ENCODE measurements at regions of chr1 and their contacts with region 1.

Region 1: DNA sequence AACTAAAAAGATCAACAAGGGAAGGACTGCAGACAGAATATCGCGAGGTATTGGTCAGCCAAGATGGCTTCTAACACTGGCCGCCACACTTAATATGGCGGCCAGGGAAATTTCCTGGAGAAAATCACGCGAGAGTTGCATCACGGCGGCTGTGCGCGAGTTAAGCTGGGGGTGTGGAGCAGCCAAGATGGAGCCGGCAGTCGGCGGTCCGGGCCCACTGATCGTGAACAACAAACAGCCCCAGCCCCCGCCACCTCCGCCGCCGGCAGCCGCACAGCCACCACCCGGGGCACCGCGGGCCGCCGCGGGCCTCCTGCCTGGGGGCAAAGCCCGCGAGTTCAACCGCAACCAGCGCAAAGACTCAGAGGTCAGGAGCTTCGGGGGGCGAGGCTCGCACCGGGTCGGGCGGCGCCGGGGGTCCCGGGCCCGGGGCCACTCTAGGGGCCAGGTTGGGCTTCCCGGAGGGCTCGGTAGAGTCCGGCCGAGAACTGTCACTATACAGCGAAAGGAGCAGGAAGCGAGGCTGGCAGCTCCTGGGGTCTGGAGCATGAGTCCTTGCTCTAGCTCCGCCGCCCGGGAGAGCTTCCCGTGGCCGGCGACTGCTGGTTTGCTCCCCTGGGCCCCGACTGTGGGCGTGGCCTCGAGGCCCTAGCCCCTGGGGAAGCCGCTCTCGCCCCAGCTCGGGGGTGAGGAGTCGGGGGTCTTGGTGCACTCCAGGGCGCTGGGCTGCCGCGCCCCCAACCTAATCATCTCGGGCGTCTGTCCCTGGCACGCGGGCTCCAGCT is at the start of gene STRIP1:
- DNase-seq: peak; percentile 91
- H3K4me3 Mint-ChIP-seq: peak within 1 kb of the TSS; percentile 95
- H3K27ac Mint-ChIP-seq: peak within 1 kb of the TSS; percentile 85
- H3K4me1 Mint-ChIP-seq: peaks cover 54% of the 10 kb centered on the region
- H3K27me3 Mint-ChIP-seq: no peaks in the 10 kb centered on the region
- total RNA-seq, gene STRIP1: 41.5 and 43.7 TPM in 2 replicates

Region 2: GRCh38 chr1:109483672-109484518 is 550.7 kb before region 1 on chr1 and contains the start of gene ATXN7L2:
- intact Hi-C with region 1: loop called (anchors 1 kb)
- DNase-seq: peak; percentile 87
- H3K4me3 Mint-ChIP-seq: peak within 1 kb of the TSS; percentile 95
- H3K27ac Mint-ChIP-seq: peak within 1 kb of the TSS; percentile 96
- H3K4me1 Mint-ChIP-seq: peaks cover 35% of the 10 kb centered on the region
- H3K27me3 Mint-ChIP-seq: peaks cover 13% of the 10 kb centered on the region
- total RNA-seq, gene ATXN7L2: 17.4 and 18.0 TPM in 2 replicates

Region 3: DNA sequence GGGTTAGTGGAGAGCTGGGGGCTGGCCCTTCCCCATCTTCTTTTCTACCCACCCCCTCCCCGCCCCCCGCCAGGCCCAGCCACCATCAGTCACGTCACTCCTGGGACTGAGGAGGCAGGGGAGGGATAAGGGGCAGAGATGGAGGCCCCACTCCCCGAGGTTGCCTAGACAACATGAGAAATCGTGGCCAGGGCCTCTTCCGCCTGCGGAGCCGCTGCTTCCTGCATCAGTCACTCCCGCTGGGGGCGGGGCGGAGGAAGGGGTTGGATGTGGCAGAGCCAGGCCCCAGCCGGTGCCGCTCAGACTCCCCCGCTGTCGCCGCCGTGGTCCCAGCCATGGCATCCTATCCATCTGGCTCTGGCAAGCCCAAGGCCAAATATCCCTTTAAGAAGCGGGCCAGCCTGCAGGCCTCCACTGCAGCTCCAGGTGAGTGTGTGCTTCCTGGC is 413.8 kb before region 1 on chr1:
- intact Hi-C with region 1: loop called (anchors 1 kb)
- DNase-seq: peak; percentile 96
- H3K4me3 Mint-ChIP-seq: peak overlapping the region; percentile 95
- H3K27ac Mint-ChIP-seq: peak overlapping the region; percentile 97
- H3K4me1 Mint-ChIP-seq: peaks cover 64% of the 10 kb centered on the region
- H3K27me3 Mint-ChIP-seq: peaks cover 2% of the 10 kb centered on the region

Region 4: DNA sequence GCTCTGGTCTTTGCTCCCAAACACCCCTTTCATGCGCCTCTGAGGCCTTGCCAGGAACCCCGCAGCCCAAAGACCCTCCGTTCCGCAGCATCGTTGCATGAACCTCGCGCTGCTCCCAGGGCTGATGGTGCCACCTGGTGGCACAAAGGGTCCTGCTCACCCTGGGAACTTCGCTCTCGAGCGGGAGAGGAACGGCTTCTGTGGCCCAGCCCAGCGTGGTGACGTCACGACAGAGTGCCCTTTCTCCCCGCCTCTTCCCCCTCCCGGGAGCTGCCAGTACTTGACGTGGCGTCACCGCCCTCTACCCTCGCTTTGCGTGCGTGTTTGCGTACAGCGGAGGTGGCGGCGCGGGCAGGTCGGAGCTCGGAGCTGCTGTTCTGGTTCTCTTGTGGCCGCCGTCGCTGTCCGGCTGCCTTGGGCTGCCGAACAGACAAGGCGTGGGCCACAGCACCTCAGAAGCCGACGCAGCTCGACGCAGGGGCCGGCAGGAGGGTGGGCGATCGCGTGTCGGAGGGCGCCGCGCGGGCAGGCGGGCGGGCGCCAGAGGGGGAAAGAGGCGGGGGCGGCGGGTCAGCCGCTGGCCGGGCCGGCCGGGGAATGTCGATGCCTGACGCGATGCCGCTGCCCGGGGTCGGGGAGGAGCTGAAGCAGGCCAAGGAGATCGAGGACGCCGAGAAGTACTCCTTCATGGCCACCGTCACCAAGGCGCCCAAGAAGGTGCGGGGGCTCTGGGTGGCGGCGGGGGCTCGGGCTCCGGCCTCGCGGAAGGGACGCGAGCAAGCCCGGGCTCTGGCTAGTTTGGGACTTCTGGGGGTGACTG is 50.0 kb before region 1 on chr1 and contains the start of gene AHCYL1:
- intact Hi-C with region 1: loop called (anchors 1 kb)
- DNase-seq: peak; percentile 99
- H3K4me3 Mint-ChIP-seq: peak within 1 kb of the TSS; percentile 93
- H3K27ac Mint-ChIP-seq: peak within 1 kb of the TSS; percentile 97
- H3K4me1 Mint-ChIP-seq: peaks cover 36% of the 10 kb centered on the region
- H3K27me3 Mint-ChIP-seq: peaks cover 4% of the 10 kb centered on the region
- total RNA-seq, gene AHCYL1: 63.8 and 64.1 TPM in 2 replicates

Region 5: GRCh38 chr1:110060034-110060661 is 25.5 kb after region 1 on chr1:
- intact Hi-C with region 1: loop called (anchors 1 kb)
- DNase-seq: peak; percentile 54
- H3K4me3 Mint-ChIP-seq: no peak overlapping the region
- H3K27ac Mint-ChIP-seq: peak overlapping the region; percentile 36
- H3K4me1 Mint-ChIP-seq: peaks cover 6% of the 10 kb centered on the region
- H3K27me3 Mint-ChIP-seq: peaks cover 2% of the 10 kb centered on the region

Region 6: DNA sequence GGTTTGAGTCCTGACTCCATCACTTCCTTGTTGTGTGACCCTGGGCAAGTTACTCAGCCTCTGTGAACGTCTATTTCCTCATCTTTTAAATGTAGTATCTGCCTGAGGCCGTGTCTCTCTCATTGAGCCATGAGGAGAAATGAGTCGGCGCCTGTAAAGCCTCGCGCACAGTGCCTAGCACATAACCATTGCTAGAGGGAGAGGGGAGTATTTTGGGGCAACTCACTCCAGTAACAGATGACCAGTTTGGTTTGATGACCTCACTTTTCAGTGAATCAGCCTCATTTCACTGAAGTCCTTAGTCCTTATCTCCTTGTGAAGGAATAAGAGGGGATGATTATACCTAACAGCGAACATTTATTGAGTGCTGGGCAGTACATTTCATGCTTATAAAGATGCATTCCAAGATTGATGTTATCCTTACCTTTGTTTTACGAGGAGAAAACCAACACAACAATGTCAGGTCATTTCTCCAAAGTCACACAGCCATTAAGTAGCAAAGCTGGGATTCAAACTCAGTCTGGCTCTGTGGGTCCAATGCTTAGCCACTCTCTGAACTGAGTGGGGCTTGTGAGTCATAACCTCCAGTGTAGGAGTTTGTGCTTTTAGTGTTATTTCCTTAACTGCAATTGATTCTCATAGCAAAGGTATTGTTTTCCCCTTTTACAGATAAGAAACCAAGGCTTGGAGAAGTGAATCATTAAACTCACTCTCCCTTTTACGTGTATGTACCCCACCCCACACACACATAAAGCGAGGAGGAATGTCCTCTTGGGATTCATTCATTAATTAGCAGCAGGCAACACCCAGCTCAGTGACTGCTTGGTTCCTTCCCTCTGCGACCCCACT is 201.4 kb after region 1 on chr1:
- intact Hi-C with region 1: loop called (anchors 1 kb)
- DNase-seq: no peak
- H3K4me3 Mint-ChIP-seq: no peak overlapping the region
- H3K27ac Mint-ChIP-seq: peak overlapping the region; percentile 80
- H3K4me1 Mint-ChIP-seq: peaks cover 51% of the 10 kb centered on the region
- H3K27me3 Mint-ChIP-seq: no peaks in the 10 kb centered on the region

Region 7: GRCh38 chr1:111448918-111449702 is 1414.5 kb after region 1 on chr1 and contains the starts of genes ATP5PB and WDR77:
- intact Hi-C with region 1: loop called (anchors 2 kb)
- DNase-seq: peak; percentile 91
- H3K4me3 Mint-ChIP-seq: peak within 1 kb of the TSS; percentile 100
- H3K27ac Mint-ChIP-seq: peak within 1 kb of the TSS; percentile 96
- H3K4me1 Mint-ChIP-seq: peaks cover 74% of the 10 kb centered on the region
- H3K27me3 Mint-ChIP-seq: no peaks in the 10 kb centered on the region
- total RNA-seq, gene ATP5PB: 280 and 282 TPM in 2 replicates
- total RNA-seq, gene WDR77: 61.3 and 62.5 TPM in 2 replicates

Measured in activated T-helper 1 cell treated with anti-CD3 and anti-CD28 coated beads, Interleukin-12 subunit alpha, Interleukin-12 subunit beta, Interleukin-2, Interleukin-4 antibody, amounts not matched to agents 30 ng/mL and 10 ng/mL and 1 ng/mL, durations not matched to agents 14 hours and 24 hours and 36 hours (primary cell).